ENCODE measurements at regions of chr20 and their contacts with region 1.

Region 1: GRCh38 chr20:39270837-39271604 is 308.9 kb downstream of the DHX35 start:
- DNase-seq: peak in 1 of 2 donors; percentile 18
- ATAC-seq: peak in 5 of 8 donors; percentile 17 to 77 (median 37)
- H3K4me3 ChIP-seq: no peak overlapping the region
- H3K27ac ChIP-seq: peak overlapping the region in 4 of 10 donors; percentile 10 to 64 (median 46)
- H3K4me1 ChIP-seq: peaks cover 0 to 36% (median 0%) of the 10 kb centered on the region in 9 donors
- H3K27me3 ChIP-seq: peaks cover 0 to 10% (median 0%) of the 10 kb centered on the region in 7 donors
- CTCF ChIP-seq: no peak

Region 2: DNA sequence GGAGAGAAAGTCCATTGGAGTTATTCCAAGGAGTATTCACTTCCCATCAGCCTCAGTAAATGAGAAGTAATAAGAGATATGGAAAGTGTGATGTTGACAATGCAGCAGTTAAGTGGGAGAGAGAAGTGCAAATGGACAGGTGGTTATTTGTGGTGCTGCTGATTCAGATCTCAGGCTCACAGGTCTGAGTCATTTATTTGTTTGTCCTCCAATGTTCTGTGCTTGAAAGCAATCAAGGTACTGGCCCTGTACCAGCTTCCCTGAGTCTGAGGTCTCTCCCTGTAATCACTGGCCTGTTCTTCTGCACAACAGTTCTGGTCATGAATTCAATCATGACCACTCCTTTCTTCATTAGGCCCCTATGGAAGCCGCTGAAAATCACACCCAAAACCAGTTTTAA is 590.4 kb after region 1 on chr20:
- intact Hi-C with region 1: loop called in 1 of 10 experiments (anchors 10 kb)
- DNase-seq: no peak
- ATAC-seq: no peak
- H3K4me3 ChIP-seq: no peak overlapping the region
- H3K27ac ChIP-seq: no peak overlapping the region
- H3K4me1 ChIP-seq: no peaks in the 10 kb centered on the region
- H3K27me3 ChIP-seq: no peaks in the 10 kb centered on the region
- CTCF ChIP-seq: no peak